ENCODE measurements at regions of chr17 and their contacts with region 1.

Region 1: DNA sequence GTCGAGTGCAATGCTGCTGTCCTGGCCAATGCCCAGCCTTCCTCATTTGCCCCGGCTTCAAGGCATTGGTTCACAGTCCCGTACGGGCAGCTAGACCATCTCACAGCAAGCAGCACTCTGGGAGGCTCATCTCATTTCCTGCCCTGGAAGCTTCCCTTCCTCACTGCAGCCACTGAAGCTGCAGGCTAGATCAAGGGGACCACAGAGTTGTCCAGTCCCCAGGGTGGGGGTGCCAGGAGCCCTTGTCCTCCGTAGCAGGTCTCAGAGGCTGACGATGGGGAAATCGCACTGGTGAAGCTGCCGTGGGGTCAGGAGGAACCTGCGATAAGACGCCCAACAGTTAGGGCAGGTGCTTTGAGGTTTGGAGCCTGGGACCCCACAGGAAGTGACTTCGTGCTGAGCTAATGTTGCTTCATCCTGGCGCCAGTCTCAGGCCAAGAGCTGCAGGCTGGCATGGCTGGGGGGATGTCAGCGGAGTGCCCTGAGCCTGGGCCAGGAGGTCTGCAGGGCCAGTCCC is at the start of gene SPNS3:
- DNase-seq: peak in 1 of 5 donors; percentile 54
- ATAC-seq: peak in 3 of 4 donors; percentile 7 to 39 (median 20)
- H3K4me3 ChIP-seq: peak within 1 kb of the TSS in 1 of 12 donors; percentile 29
- H3K27ac ChIP-seq: no peak within 1 kb of the TSS
- H3K4me1 ChIP-seq: peaks cover 0 to 28% (median 0%) of the 10 kb centered on the region in 12 donors
- H3K27me3 ChIP-seq: no peaks in the 10 kb centered on the region
- CTCF ChIP-seq: no peak
- POLR2A ChIP-seq: no peak
- total RNA-seq, gene SPNS3: 0.23 to 1.9 (median 1.1) TPM in 6 of 9 donors, not detected in the others

Region 2: DNA sequence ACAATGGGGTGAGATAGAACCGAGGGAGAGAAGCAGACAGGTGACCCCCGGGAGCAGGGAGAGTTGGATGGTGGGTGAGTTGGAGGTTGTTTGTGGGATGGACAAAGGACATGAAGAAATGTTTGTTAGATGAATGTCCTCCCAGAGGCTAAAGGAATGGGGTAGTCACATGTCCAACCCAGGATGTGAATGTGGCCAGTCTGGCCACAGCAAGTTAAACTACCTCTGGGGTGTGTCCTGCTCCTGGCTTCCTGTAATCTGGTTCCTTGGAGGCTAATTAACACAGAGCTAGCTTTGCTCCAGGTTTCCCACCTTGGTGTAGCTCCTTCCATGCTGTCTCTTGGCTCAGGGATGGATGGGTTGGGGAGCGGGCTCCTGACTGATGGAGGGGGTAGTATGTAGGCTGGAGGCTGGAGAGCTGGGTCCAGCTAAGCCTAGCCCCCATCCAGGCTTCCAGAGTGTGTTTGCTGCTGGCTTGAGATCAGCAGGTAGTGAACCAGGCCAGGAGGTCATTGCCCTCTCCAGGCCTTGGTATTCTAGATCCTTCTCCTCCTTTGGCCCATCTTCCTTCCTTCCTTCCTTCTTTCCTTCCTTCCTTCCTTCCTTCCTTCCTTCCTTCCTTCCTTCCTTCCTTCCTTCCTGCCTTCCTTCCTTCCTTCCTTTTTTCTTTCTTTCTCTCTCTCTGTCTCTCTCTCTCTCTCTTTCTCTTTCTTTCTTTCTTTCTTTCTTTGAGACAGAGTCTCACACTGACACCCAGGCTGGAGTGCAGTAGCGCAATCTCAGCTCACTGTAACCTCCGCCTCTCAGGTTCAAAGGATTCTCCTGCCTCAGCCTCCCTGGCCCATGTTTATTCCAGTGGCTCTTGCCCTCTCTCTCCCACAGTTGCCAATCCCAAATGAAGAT is 39.1 kb before region 1 on chr17:
- intact Hi-C with region 1: no loop called
- DNase-seq: no peak
- ATAC-seq: no peak
- H3K4me3 ChIP-seq: no peak overlapping the region
- H3K27ac ChIP-seq: no peak overlapping the region
- H3K4me1 ChIP-seq: no peaks in the 10 kb centered on the region
- H3K27me3 ChIP-seq: no peaks in the 10 kb centered on the region
- CTCF ChIP-seq: no peak
- POLR2A ChIP-seq: no peak

Region 3: GRCh38 chr17:4476511-4477070 is 43.0 kb after region 1 on chr17:
- intact Hi-C with region 1: loop called in 1 of 10 experiments (anchors 5 kb)
- DNase-seq: peak in 1 of 5 donors; percentile 25
- ATAC-seq: peak in 1 of 4 donors; percentile 2
- H3K4me3 ChIP-seq: no peak overlapping the region
- H3K27ac ChIP-seq: peak overlapping the region in 3 of 12 donors; percentile 17 to 54 (median 44)
- H3K4me1 ChIP-seq: peaks cover 0 to 40% (median 16%) of the 10 kb centered on the region in 12 donors
- H3K27me3 ChIP-seq: no peaks in the 10 kb centered on the region
- CTCF ChIP-seq: no peak
- POLR2A ChIP-seq: no peak